Gastrocnemius medialis (tissue), 4 donors: ENCODE measurements at regions of chr7 and their contacts with region 1.

Region 1: DNA sequence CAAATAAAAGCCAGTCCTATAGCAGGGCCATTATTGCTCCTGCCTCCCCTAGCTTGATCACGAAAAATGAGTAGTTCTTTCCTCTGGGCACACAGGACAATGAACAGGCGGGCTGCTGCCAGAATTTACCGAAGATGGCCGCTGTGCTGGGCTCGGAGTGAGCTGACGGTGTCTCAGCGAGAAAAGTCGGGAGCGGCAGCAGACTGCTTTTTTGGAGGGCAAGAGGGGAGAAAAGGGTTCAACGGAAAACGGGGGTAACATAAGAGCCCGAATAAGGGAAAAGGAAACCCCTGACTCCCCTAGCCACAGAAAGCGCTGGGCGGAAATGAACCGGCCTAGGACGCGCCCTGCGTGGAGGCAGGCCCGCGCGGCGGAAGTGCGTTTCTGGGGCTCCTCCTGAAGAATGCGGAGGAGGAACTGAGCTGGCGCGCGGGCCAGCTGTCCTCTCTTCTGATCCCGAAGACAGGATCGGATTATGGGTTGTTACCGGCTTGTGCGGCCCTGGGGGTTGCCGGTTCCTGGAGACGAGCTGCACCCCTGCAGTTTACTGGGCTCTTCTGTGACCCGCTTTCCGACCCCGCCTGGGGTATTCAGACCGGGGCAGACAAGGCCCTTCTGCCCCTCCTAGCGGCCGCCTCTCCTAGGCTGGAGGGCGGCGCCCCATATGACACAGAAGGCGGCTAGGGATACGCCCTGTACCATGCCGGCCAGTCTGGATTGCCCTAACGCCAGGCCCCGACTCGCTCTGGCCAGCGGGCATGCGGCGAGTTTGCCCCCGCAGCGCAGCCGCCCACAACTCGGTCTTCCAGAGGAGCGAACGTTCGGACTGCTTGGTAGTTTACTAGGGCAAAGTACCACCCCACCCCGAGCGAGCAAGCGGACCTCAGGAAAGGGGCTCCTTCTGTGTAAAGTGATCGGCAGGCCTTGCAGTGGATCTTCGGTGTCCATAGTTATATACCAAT is 30.1 kb upstream of the KMT2E start:
- DNase-seq: peak; percentile 84 to 88
- ATAC-seq: peak; percentile 86 to 89
- H3K4me3 ChIP-seq: peak overlapping the region; percentile 68 to 82 (median 77)
- H3K27ac ChIP-seq: no peak overlapping the region
- H3K4me1 ChIP-seq: peaks cover 36 to 44% of the 10 kb centered on the region in 2 donors
- H3K27me3 ChIP-seq: no peaks in the 10 kb centered on the region
- CTCF ChIP-seq: peak; percentile 60 to 81 (median 70)
- POLR2A ChIP-seq: peak; percentile 89 to 92

Region 2: GRCh38 chr7:105013221-105013815 is 29.5 kb after region 1 on chr7:
- in situ Hi-C with region 1: loop called in 1 of 4 experiments (anchors 5 kb)
- intact Hi-C with region 1: loop called (anchors 1 kb)
- DNase-seq: peak; percentile 96 to 97
- ATAC-seq: peak; percentile 65 to 69
- H3K4me3 ChIP-seq: peak overlapping the region; percentile 81 to 98 (median 92)
- H3K27ac ChIP-seq: peak overlapping the region in 1 of 4 donors; percentile 100
- H3K4me1 ChIP-seq: peaks cover 51 to 52% of the 10 kb centered on the region in 2 donors
- H3K27me3 ChIP-seq: no peaks in the 10 kb centered on the region
- CTCF ChIP-seq: peak; percentile 45 to 78 (median 65)
- POLR2A ChIP-seq: peak; percentile 95 to 97

Region 3: DNA sequence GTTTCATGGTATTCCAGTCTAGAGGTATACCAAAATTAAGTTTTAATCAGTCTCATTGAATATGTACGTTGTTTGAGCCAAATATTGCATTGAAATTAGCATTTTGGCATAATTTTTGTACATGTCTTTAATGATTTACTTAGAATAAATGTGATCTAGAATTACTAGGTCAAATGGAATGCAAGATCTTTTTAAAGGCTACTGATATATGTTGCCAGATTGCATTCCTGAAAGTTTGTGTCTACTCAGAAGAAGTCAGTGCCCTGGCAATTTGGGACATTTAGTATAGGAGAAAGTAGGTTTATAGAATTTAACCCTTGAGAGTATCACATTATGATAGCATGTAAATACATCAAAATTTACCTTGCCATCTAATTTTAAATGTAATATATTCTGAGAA is 62.6 kb after region 1 on chr7:
- in situ Hi-C with region 1: loop called in 1 of 4 experiments (anchors 5 kb)
- intact Hi-C with region 1: loop called (anchors 1 kb)
- DNase-seq: no peak
- ATAC-seq: no peak
- H3K4me3 ChIP-seq: no peak overlapping the region
- H3K27ac ChIP-seq: peak overlapping the region in 2 of 4 donors; percentile 7 to 10
- H3K4me1 ChIP-seq: peaks cover 39 to 40% of the 10 kb centered on the region in 2 donors
- H3K27me3 ChIP-seq: no peaks in the 10 kb centered on the region
- CTCF ChIP-seq: no peak
- POLR2A ChIP-seq: no peak

Region 4: DNA sequence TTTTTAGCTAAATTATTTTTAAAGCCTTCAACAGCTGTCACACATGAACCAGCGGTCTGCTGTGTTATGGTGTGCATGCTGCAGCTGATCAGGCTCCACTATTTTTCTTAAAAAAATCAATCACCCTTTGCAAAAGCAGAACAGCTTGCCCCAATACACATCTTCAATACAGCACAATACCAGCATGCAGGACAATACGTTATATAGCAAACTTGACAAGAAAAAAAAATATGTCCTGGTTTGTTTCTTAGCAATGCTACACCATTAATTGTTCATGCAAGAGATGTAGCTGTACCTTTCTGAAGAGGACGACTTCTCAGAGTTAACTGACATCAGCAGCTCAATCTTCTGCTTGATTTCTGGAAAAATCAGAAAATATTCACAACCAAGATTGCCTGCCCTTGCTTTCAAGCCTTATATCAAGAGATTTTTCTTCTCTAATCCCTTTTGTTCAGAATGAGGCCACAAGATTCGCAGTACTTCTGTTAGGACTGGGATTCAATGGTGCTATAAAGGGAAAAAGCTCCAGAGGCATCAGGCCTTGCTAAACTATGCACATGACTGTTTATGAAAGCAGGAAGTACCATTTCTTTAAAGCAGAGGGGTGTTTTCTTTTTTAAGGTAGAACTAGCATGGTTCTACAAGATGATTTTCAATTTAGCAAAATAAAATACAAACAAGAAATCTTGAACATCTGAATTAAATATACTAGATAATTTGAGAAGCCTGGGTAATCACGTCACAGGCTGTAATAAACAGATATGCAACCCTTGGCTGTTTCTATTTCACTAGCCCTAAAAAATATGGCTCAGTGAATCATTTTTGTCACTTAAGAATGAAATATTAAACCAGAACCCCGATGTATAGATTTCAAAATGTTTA is 284.9 kb after region 1 on chr7:
- in situ Hi-C with region 1: no loop called
- intact Hi-C with region 1: loop called (anchors 5 kb)
- DNase-seq: peak in 1 of 2 donors; percentile 22
- ATAC-seq: peak; percentile 95 to 96
- H3K4me3 ChIP-seq: peak overlapping the region; percentile 44 to 59 (median 56)
- H3K27ac ChIP-seq: peak overlapping the region; percentile 81 to 87 (median 84)
- H3K4me1 ChIP-seq: peaks cover 19 to 40% of the 10 kb centered on the region in 2 donors
- H3K27me3 ChIP-seq: no peaks in the 10 kb centered on the region
- CTCF ChIP-seq: no peak
- POLR2A ChIP-seq: peak; percentile 31 to 72

Region 5: DNA sequence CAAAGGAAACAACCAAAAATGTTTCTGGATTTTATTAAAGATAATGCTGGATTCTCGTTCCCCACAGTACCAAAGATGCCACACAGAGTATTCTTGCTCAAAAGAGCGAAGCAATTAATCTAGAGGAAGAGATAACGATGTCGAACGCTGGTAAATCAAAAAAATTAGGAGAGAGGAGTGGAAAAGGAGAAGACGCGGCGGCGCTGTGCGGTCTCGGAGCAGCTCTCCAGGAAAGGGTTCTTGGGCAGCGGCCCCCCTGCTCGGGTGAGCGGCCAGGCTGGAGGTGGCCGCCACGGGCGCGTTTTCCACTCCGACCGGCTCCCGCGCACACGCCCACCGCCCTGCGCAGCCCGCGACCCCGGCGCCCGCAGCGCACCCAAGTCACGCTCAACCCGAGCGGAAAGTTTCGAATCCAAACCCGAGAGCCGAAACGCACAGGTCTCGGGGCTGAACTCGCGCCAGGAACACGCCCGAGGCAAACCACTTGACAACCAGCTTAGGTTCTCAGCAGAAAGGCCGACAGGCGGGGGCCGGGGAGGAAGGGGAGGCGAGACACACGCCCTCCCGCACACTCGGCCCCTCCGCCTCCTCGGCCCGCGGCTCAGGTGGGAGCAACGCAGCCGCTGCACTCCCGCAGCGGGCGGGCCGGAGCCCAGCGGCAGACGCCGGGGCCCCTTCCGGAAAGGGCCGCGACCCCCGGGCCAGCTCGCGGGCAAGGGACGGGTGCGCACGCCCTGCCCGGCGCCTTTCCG is 403.9 kb after region 1 on chr7:
- in situ Hi-C with region 1: no loop called
- intact Hi-C with region 1: loop called (anchors 2 kb)
- DNase-seq: peak; percentile 62 to 64
- ATAC-seq: peak; percentile 73 to 79
- H3K4me3 ChIP-seq: peak overlapping the region; percentile 67 to 94 (median 70)
- H3K27ac ChIP-seq: peak overlapping the region; percentile 24 to 92 (median 66)
- H3K4me1 ChIP-seq: peaks cover 9 to 12% of the 10 kb centered on the region in 2 donors
- H3K27me3 ChIP-seq: no peaks in the 10 kb centered on the region
- CTCF ChIP-seq: peak in 1 of 5 experiments; percentile 5
- POLR2A ChIP-seq: peak; percentile 8 to 29

Region 6: DNA sequence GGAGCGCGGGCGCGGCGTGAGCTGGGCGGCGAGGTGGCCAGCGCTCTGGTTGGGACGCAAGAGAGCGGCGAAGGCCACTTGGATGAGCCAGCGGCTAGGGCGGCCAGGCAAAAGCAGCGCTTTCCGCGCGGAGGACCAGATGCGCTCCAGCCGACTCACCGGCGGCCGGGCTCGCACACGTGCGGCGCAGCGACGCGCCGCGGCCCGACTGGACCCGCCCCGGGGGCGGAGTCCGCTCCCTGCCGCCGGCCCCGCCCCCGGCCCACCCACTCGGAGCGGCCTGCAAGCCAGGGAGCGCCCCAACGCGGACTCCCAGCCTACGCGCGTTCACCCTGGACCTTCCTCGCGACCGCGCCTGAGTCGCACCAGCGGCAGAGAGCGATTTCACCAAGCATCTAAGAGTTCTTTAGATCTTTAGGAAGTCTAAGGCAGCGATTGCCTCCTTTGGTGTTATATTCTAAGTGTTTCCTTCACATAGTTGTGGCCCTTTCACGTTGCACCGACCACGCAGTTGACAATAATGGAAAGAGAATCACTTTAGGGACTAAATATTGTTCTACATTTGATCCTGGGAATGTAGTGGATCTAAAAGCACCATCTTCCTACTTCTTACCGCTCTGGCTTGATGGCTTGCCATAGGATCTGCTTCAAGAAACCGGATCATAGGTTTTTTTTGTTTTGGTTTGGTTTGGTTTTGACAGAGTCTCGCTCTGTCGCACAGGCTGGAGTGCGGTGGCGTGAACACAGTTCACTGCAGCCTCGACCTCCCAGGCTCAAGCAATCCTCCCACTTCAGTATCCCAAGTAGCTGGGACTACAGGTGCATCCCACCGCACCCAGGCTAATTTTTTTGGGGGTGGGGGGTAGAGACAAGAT is 538.4 kb after region 1 on chr7 and contains the start of gene PUS7:
- in situ Hi-C with region 1: no loop called
- intact Hi-C with region 1: loop called (anchors 2 kb)
- DNase-seq: peak; percentile 72 to 83
- ATAC-seq: peak; percentile 93 to 95
- H3K4me3 ChIP-seq: peak within 1 kb of the TSS; percentile 56 to 87 (median 64)
- H3K27ac ChIP-seq: peak within 1 kb of the TSS; percentile 82 to 96 (median 86)
- H3K4me1 ChIP-seq: peaks cover 12 to 15% of the 10 kb centered on the region in 2 donors
- H3K27me3 ChIP-seq: no peaks in the 10 kb centered on the region
- CTCF ChIP-seq: peak in 2 of 5 experiments; percentile 16 to 26
- POLR2A ChIP-seq: peak; percentile 90 to 91
- total RNA-seq, gene PUS7: 13.4 to 66.2 (median 17.8) TPM

Region 7: DNA sequence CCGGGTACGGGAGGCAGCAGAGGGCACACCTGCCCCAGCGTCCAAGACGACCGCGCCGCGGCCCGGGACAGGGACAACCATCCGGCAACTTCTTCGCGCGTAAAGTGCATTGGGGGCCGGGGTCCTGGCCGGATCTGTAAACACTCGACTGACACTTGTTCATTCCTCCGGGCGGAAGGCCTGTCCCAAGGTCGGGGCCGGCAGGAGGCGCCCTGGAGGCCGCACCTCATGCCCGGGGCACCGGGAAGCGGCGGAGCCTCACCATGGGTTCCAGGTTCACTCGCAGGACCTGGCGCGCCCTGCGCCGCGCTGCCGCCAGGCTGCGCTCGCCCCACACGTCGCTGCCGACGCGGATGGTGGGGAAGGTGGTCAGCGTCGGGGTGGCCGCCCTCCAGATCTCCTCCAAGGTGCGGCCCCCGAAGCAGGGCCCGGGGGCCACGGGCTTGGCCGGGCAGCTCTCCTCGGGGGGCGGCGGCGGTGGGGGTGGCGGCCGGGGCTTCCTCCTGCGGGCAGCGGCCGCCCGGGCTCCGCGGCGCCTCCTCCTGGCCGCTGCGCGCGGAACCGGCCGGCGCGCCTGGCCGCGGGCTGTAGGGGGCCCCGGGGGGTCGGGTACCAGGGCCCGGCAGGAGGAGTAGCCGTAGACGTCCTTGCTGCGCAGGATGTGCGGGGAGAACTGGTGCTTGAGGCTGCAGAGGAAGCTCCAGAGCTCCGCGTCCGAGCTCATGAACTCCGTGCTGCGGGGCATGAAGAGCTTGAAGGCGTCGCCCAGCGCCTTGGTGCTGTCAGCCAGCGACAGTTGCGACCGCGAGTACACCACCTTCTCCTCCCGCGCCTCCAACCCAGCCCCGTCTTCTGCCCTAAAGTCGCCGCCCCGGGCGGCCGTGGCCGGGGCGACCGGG is 1676.4 kb after region 1 on chr7:
- in situ Hi-C with region 1: no loop called
- intact Hi-C with region 1: loop called (anchors 10 kb)
- DNase-seq: peak; percentile 23 to 59
- ATAC-seq: peak; percentile 57 to 66
- H3K4me3 ChIP-seq: peak overlapping the region; percentile 60 to 89 (median 78)
- H3K27ac ChIP-seq: peak overlapping the region; percentile 82 to 91 (median 88)
- H3K4me1 ChIP-seq: peaks cover 8 to 12% of the 10 kb centered on the region in 2 donors
- H3K27me3 ChIP-seq: no peaks in the 10 kb centered on the region
- CTCF ChIP-seq: peak; percentile 49 to 76 (median 67)
- POLR2A ChIP-seq: peak in 1 of 2 donors; percentile 9